ENCODE measurements at regions of chr3 and their contacts with region 1.

Region 1: DNA sequence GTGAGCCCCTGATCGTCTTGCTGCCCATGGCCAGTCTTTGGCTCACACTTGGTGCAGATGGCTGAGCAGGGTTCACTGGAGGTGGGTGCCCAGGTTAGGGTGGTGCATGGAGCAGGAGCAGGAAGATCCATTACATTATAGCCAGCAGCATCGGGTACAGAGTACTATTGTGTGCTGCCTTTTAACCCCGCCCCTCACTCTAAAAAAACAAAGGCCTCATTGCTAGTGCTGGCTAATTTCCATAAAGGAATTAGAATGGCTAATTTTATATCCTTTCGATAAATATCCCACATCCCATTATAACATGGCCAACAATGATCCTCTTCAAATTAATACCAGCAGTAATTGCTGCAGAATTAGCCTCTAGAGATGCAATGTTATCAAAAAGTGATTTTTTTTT is 45.8 kb upstream of the PPP4R2 start:
- DNase-seq: no peak
- ATAC-seq: no peak
- H3K4me3 ChIP-seq: no peak overlapping the region
- H3K27ac ChIP-seq: no peak overlapping the region
- H3K4me1 ChIP-seq: no peaks in the 10 kb centered on the region
- H3K27me3 ChIP-seq: no peaks in the 10 kb centered on the region
- CTCF ChIP-seq: no peak

Region 2: DNA sequence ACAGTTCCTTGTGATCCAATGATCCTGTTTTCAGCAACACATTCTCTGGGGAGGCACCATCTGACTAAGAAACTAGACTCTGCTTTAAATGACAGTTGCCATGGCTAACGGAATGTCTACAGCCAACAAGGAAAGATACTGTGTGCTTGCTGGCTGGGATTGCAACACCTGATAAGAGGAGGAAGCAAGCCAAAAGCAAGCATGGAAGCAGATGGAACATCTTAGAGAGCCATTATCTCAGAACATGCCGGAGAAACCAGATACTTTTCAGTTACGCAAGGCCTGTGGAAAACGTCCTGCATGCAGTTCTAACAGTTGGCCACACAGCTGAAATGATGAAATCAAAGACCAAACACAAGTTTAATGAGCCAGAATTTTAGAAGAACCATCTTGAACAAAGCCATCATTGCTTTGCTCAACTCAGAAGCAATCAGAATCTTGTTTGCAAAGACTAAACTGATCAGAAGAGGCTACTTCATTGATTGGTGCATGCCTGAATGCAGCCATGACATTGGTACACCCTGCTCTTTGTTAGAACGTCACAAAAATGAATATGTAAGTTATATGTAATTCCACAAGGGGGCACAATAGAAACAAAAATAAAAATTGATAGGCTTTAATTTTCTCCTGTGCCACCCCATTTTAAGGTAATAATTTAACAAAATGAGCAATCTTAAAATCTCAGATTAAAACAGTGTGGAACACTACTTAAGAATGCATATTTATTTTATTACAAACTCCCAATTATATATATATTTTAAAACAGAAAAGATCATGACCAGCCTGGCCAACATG is 12.1 kb before region 1 on chr3:
- CTCF ChIA-PET with region 1: no interaction called
- POLR2A ChIA-PET with region 1: no interaction called
- in situ Hi-C with region 1: no loop called
- intact Hi-C with region 1: no loop called
- DNase-seq: peak; percentile 46
- ATAC-seq: peak; percentile 90
- H3K4me3 ChIP-seq: no peak overlapping the region
- H3K27ac ChIP-seq: no peak overlapping the region
- H3K4me1 ChIP-seq: no peaks in the 10 kb centered on the region
- H3K27me3 ChIP-seq: no peaks in the 10 kb centered on the region
- CTCF ChIP-seq: peak; percentile 60; the same call in 1 of the 2 replicates

Region 3: DNA sequence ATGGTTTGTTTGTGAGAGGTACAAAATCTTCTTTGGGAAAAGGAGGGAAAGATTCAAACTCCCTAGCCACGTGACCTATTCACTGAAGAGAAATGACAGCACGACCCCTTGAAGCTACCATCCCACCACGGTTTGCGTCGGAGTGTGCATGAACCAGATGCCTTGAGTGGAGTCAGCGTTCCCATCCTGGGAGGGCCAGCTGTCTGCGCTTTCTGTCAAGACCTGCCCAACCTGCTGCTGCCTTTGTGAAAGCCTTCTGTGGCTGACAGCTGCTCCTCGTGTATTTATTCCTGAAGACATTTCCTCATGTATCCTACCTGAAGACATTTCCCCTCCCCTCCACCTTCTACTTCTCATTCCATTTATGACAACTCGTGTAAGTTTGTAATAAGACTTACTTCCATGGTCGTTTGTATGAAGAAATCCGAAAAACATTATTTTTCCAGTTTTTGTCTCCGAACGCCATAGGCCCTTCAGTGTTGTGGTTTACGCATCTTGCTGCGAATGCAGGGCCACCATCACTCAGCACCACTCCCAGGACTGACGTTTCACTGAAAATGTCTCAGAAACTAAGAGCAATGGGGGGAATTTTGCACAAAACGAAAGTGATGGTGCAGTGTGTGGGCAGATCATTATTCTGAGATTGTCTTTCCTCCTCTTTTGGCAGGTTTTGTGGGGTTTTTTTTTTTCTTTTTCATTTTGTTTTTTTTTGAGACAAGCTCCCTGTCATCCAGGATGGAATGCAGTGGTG is 129.6 kb after region 1 on chr3:
- CTCF ChIA-PET with region 1: no interaction called
- POLR2A ChIA-PET with region 1: interaction called, 16 read pairs
- in situ Hi-C with region 1: no loop called
- intact Hi-C with region 1: no loop called
- DNase-seq: no peak
- ATAC-seq: no peak
- H3K4me3 ChIP-seq: no peak overlapping the region
- H3K27ac ChIP-seq: no peak overlapping the region
- H3K4me1 ChIP-seq: no peaks in the 10 kb centered on the region
- H3K27me3 ChIP-seq: no peaks in the 10 kb centered on the region
- CTCF ChIP-seq: no peak

Region 4: DNA sequence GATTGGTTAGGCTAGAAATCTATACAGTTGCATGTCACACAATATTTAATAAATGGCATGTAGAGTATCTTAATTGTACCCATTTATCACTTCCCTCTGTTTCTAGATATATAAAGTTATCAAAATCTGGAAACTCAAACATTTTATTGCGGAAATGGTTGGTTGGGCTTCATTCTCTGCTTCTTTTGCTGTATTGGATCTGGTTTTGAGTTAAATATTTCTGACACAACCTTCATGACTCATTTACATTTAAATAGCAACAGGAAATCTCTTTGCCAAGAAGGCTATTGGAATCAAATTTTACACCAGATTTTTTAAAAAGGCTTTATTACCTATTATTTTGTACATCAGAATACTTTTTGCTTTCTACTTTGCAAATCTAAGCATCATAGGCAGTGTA is 264.5 kb after region 1 on chr3:
- CTCF ChIA-PET with region 1: no interaction called
- POLR2A ChIA-PET with region 1: no interaction called
- in situ Hi-C with region 1: no loop called
- intact Hi-C with region 1: no loop called
- DNase-seq: no peak
- ATAC-seq: no peak
- H3K4me3 ChIP-seq: no peak overlapping the region
- H3K27ac ChIP-seq: no peak overlapping the region
- H3K4me1 ChIP-seq: no peaks in the 10 kb centered on the region
- H3K27me3 ChIP-seq: no peaks in the 10 kb centered on the region
- CTCF ChIP-seq: no peak